Naive thymus-derived CD4-positive, alpha-beta T cell (primary cell): ENCODE measurements at regions of chr1 and their contacts with region 1.

Region 1: GRCh38 chr1:172662464-172663109 is 3.7 kb downstream of the FASLG start:
- DNase-seq: peak; percentile 50 to 86 (median 82)
- ATAC-seq: peak; percentile 87
- H3K4me3 ChIP-seq: peak overlapping the region; percentile 22
- H3K4me3 Mint-ChIP-seq: peak overlapping the region; percentile 44 to 75 (median 66)
- H3K27ac ChIP-seq: no peak overlapping the region
- H3K27ac Mint-ChIP-seq: peak overlapping the region in 8 of 9 donors; percentile 3 to 74 (median 51)
- H3K4me1 ChIP-seq: peaks cover 42 to 49% of the 10 kb centered on the region in 2 donors
- H3K4me1 Mint-ChIP-seq: peaks cover 41 to 78% (median 57%) of the 10 kb centered on the region in 7 donors
- H3K27me3 ChIP-seq: no peaks in the 10 kb centered on the region
- H3K27me3 Mint-ChIP-seq: peaks cover 0 to 8% (median 0%) of the 10 kb centered on the region in 5 donors

Region 2: DNA sequence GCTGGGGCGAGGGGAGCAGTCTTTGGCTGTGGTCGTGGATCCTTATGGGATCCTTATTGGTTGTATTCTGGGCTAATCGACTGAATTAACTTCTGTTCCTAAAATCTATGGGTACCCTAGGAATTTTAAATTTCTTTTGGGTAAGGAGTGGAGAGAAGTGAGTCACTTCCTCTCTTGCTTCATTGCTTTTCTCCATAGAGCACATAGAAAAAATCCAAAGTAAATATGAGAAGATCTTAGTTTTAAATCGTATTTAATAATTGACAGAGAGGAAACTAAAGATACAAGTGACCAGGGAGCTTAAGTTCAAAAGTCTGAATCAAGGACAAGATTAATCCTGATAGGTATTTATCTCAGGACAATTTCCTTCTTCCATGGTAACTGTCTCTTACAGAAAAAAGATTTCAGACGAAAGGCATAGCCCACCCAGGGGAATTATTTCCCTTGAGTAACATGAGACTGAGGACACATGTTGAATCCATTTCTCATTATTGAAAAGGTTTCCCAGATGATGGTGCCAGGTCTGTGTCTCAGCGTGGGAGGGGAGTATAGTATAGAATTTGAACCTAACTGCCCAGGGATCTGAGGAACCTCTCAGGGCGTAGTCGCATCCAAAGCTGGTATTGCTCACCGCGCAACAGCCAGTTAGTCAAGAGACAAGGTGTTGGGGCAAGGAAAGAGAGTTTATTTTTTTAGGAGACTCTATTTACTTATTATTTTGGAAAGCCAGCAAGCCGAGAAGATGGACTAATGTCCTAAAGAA is 32.4 kb before region 1 on chr1:
- CTCF ChIA-PET with region 1: interaction called, 4 read pairs
- POLR2A ChIA-PET with region 1: interaction called, 3 read pairs
- intact Hi-C with region 1: loop called (anchors 5 kb)
- DNase-seq: no peak
- ATAC-seq: no peak
- H3K4me3 ChIP-seq: no peak overlapping the region
- H3K4me3 Mint-ChIP-seq: no peak overlapping the region
- H3K27ac ChIP-seq: no peak overlapping the region
- H3K27ac Mint-ChIP-seq: peak overlapping the region in 2 of 9 donors; percentile 19 to 40
- H3K4me1 ChIP-seq: peaks cover 14 to 20% of the 10 kb centered on the region in 2 donors
- H3K4me1 Mint-ChIP-seq: peaks cover 13 to 56% (median 36%) of the 10 kb centered on the region in 7 donors
- H3K27me3 ChIP-seq: no peaks in the 10 kb centered on the region
- H3K27me3 Mint-ChIP-seq: peaks cover 0 to 30% (median 0%) of the 10 kb centered on the region in 5 donors

Region 3: DNA sequence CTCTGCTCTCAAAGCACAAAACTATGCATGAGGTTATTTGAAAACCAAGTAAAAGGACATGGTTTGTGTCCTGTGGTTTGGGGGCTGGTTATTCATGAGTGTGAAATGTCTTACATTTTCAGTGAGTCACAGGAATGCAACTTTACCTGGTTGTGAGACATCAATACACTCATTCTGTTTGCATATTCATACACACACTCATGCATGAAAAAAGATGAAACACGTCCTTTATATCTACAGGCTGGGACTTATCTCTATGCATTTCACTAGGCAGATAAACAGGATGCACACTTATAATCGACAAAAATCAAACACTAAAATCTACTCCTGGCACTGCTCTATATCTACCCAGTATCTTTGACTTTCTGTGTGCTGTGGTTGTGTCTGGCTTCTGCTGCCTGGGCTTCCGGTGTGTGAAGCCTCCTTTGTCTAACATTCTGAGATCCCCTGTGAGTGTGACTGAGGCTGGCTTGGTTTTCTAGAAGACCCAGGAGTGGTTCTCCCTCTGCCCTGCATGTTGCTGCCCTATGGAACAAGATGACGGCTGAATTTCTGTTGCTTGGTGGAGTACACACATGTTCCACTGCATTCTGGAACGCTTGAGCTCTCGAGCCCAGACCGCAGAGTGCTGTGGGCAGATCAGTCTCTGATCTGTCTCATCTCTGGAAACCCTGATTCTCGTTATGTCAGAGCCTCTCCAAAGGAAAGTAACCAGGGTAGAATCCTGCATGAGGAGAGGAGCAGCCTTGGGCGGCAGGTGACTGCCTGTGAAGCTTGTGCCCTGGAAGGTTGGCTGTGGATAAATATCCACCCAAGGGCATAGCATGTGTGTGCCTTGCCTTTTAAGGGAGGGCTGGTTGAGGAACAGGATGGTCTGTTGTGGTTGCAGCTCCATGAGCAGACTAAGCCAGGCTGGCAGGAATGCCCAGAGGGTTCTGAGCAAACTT is 23.4 kb before region 1 on chr1:
- CTCF ChIA-PET with region 1: interaction called, 4 read pairs
- POLR2A ChIA-PET with region 1: interaction called, 5 read pairs
- intact Hi-C with region 1: loop called (anchors 1 kb)
- DNase-seq: peak; percentile 12 to 85 (median 79)
- ATAC-seq: peak; percentile 87
- H3K4me3 ChIP-seq: peak overlapping the region; percentile 32
- H3K4me3 Mint-ChIP-seq: peak overlapping the region; percentile 46 to 88 (median 78)
- H3K27ac ChIP-seq: peak overlapping the region; percentile 43
- H3K27ac Mint-ChIP-seq: peak overlapping the region; percentile 88 to 94 (median 91)
- H3K4me1 ChIP-seq: peaks cover 63 to 72% of the 10 kb centered on the region in 2 donors
- H3K4me1 Mint-ChIP-seq: peaks cover 54 to 87% (median 81%) of the 10 kb centered on the region in 7 donors
- H3K27me3 ChIP-seq: no peaks in the 10 kb centered on the region
- H3K27me3 Mint-ChIP-seq: peaks cover 0 to 29% (median 0%) of the 10 kb centered on the region in 5 donors

Region 4: GRCh38 chr1:172647110-172647564 is 15.4 kb before region 1 on chr1:
- CTCF ChIA-PET with region 1: no interaction called
- POLR2A ChIA-PET with region 1: interaction called, 11 read pairs
- intact Hi-C with region 1: loop called in 1 of 2 experiments (anchors 1 kb)
- DNase-seq: peak in 2 of 9 donors; percentile 12 to 51
- ATAC-seq: peak; percentile 53
- H3K4me3 ChIP-seq: no peak overlapping the region
- H3K4me3 Mint-ChIP-seq: peak overlapping the region in 4 of 10 donors; percentile 11 to 34 (median 27)
- H3K27ac ChIP-seq: no peak overlapping the region
- H3K27ac Mint-ChIP-seq: peak overlapping the region in 4 of 9 donors; percentile 3 to 57 (median 34)
- H3K4me1 ChIP-seq: peaks cover 33 to 35% of the 10 kb centered on the region in 2 donors
- H3K4me1 Mint-ChIP-seq: peaks cover 35 to 61% (median 53%) of the 10 kb centered on the region in 7 donors
- H3K27me3 ChIP-seq: no peaks in the 10 kb centered on the region
- H3K27me3 Mint-ChIP-seq: peaks cover 0 to 31% (median 0%) of the 10 kb centered on the region in 5 donors

Region 5: GRCh38 chr1:172679000-172679772 is 16.6 kb after region 1 on chr1:
- CTCF ChIA-PET with region 1: interaction called, 3 read pairs
- POLR2A ChIA-PET with region 1: interaction called, 7 read pairs
- intact Hi-C with region 1: loop called in 1 of 2 experiments (anchors 2 kb)
- DNase-seq: no peak
- ATAC-seq: no peak
- H3K4me3 ChIP-seq: no peak overlapping the region
- H3K4me3 Mint-ChIP-seq: no peak overlapping the region
- H3K27ac ChIP-seq: no peak overlapping the region
- H3K27ac Mint-ChIP-seq: peak overlapping the region in 1 of 9 donors; percentile 13
- H3K4me1 ChIP-seq: peaks cover 24 to 49% of the 10 kb centered on the region in 2 donors
- H3K4me1 Mint-ChIP-seq: peaks cover 18 to 73% (median 36%) of the 10 kb centered on the region in 7 donors
- H3K27me3 ChIP-seq: no peaks in the 10 kb centered on the region
- H3K27me3 Mint-ChIP-seq: peaks cover 0 to 12% (median 0%) of the 10 kb centered on the region in 5 donors

Region 6: GRCh38 chr1:172699111-172699510 is 36.5 kb after region 1 on chr1:
- CTCF ChIA-PET with region 1: no interaction called
- POLR2A ChIA-PET with region 1: interaction called, 3 read pairs
- intact Hi-C with region 1: loop called (anchors 1 kb)
- DNase-seq: peak; percentile 13 to 76 (median 65)
- ATAC-seq: peak; percentile 92
- H3K4me3 ChIP-seq: peak overlapping the region; percentile 37
- H3K4me3 Mint-ChIP-seq: peak overlapping the region; percentile 61 to 81 (median 76)
- H3K27ac ChIP-seq: peak overlapping the region; percentile 44
- H3K27ac Mint-ChIP-seq: peak overlapping the region in 7 of 9 donors; percentile 87 to 98 (median 92)
- H3K4me1 ChIP-seq: peaks cover 77 to 80% of the 10 kb centered on the region in 2 donors
- H3K4me1 Mint-ChIP-seq: peaks cover 0 to 53% (median 0%) of the 10 kb centered on the region in 7 donors
- H3K27me3 ChIP-seq: no peaks in the 10 kb centered on the region
- H3K27me3 Mint-ChIP-seq: no peaks in the 10 kb centered on the region

Region 7: DNA sequence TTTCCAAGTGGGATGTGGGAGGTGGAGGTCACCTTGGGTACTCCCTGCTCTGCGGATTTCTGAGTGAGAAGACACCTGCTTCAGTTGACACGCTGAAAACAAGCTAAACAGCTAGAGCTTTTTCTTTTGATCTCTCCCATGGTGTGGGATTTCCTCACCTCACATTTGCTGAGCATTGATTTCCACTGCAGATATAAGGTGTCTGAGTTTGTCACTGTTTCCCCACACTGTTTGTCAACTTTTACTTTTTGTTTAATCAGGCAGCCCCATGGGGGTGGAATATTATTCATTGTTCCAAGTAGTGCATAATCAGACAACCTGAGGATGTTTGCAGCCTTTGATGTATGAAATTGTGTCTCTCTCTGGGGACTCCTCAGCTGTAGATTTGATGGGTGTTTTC is 45.9 kb after region 1 on chr1:
- CTCF ChIA-PET with region 1: interaction called, 3 read pairs
- POLR2A ChIA-PET with region 1: interaction called, 3 read pairs
- intact Hi-C with region 1: loop called in 1 of 2 experiments (anchors 1 kb)
- DNase-seq: peak in 7 of 9 donors; percentile 43 to 62 (median 53)
- ATAC-seq: peak; percentile 86
- H3K4me3 ChIP-seq: peak overlapping the region; percentile 7
- H3K4me3 Mint-ChIP-seq: peak overlapping the region; percentile 20 to 73 (median 51)
- H3K27ac ChIP-seq: no peak overlapping the region
- H3K27ac Mint-ChIP-seq: peak overlapping the region in 3 of 9 donors; percentile 31 to 71 (median 43)
- H3K4me1 ChIP-seq: peaks cover 35 to 48% of the 10 kb centered on the region in 2 donors
- H3K4me1 Mint-ChIP-seq: peaks cover 10 to 40% (median 27%) of the 10 kb centered on the region in 7 donors
- H3K27me3 ChIP-seq: no peaks in the 10 kb centered on the region
- H3K27me3 Mint-ChIP-seq: peaks cover 0 to 26% (median 0%) of the 10 kb centered on the region in 5 donors